PC-3 (cell line): ENCODE measurements at regions of chr5 and their contacts with region 1.

Region 1: GRCh38 chr5:98275980-98276379 is 497.5 kb upstream of the RGMB start:
- DNase-seq: no peak
- ATAC-seq: no peak
- H3K4me3 ChIP-seq: no peak overlapping the region
- H3K27ac ChIP-seq: no peak overlapping the region
- H3K4me1 ChIP-seq: no peaks in the 10 kb centered on the region
- H3K27me3 ChIP-seq: no peaks in the 10 kb centered on the region
- CTCF ChIP-seq: peak; percentile 28; the same call in 1 of the 2 replicates

Region 2: GRCh38 chr5:98121036-98121934 is 154.7 kb before region 1 on chr5:
- CTCF ChIA-PET with region 1: no interaction called
- POLR2A ChIA-PET with region 1: no interaction called
- intact Hi-C with region 1: no loop called
- DNase-seq: no peak
- ATAC-seq: no peak
- H3K4me3 ChIP-seq: no peak overlapping the region
- H3K27ac ChIP-seq: no peak overlapping the region
- H3K4me1 ChIP-seq: no peaks in the 10 kb centered on the region
- H3K27me3 ChIP-seq: no peaks in the 10 kb centered on the region
- CTCF ChIP-seq: no peak; the same call in 1 of the 2 replicates

Region 3: DNA sequence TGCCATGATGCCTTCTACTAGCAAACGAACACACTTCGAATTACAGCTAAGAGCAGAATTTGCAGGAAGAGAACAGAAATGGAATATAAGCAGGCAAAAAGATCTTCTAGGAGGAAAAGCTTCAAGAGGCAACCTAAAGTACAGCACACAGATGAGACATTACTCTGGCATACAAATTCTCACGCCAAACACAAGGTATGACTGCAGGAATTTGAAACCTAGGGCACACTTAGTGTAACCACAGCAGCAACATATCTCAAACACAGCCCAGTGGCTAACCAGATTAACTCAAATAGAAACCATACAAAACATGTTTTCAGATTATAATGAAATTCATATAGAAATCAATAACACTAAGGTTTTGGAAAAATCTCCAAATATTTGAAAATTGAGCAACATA is 16.5 kb after region 1 on chr5:
- CTCF ChIA-PET with region 1: no interaction called
- POLR2A ChIA-PET with region 1: no interaction called
- intact Hi-C with region 1: loop called (anchors 2 kb)
- DNase-seq: peak; percentile 52
- ATAC-seq: peak; percentile 39; the same call in 1 of the 2 replicates
- H3K4me3 ChIP-seq: no peak overlapping the region
- H3K27ac ChIP-seq: no peak overlapping the region
- H3K4me1 ChIP-seq: 0 out of 2 replicates have a peak, but pooled peaks cover 6% of the 10 kb centered on the region
- H3K27me3 ChIP-seq: no peaks in the 10 kb centered on the region
- CTCF ChIP-seq: no peak

Region 4: DNA sequence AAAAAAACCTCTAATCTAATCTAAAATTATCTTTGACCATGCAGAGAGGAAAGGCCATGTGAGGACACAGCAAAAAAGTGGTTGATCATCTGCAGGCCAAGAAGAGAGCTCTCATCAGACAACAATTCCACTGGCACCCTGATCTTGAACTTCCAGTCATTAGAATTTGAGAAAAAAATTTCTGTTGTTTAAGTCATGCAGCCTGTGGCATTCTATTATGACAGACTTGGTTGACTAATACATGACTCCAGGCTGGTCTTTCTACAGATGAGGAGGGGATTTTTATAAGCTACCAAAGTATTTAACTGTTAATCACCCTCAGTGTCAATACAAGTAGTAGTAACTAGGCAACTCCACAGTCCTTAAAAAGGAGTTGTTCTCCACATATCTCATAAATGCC is 139.0 kb after region 1 on chr5:
- CTCF ChIA-PET with region 1: no interaction called
- POLR2A ChIA-PET with region 1: no interaction called
- intact Hi-C with region 1: no loop called
- DNase-seq: peak; percentile 96
- ATAC-seq: peak; percentile 95
- H3K4me3 ChIP-seq: no peak overlapping the region
- H3K27ac ChIP-seq: peak overlapping the region; percentile 92
- H3K4me1 ChIP-seq: peaks cover 33% of the 10 kb centered on the region
- H3K27me3 ChIP-seq: no peaks in the 10 kb centered on the region
- CTCF ChIP-seq: no peak